ENCODE measurements at regions of chr16 and their contacts with region 1.

Region 1: GRCh38 chr16:11255737-11256660 is at the start of gene SOCS1:
- DNase-seq: peak; percentile 86 to 95
- ATAC-seq: peak; percentile 61 to 86 (median 72)
- H3K4me3 ChIP-seq: peak within 1 kb of the TSS; percentile 73
- H3K4me3 Mint-ChIP-seq: peak within 1 kb of the TSS; percentile 98
- H3K27ac ChIP-seq: peak within 1 kb of the TSS; percentile 87
- H3K27ac Mint-ChIP-seq: peak within 1 kb of the TSS; percentile 93 to 96
- H3K4me1 ChIP-seq: peaks cover 66% of the 10 kb centered on the region
- H3K4me1 Mint-ChIP-seq: peaks cover 39 to 54% of the 10 kb centered on the region in 2 donors
- H3K27me3 ChIP-seq: no peaks in the 10 kb centered on the region
- H3K27me3 Mint-ChIP-seq: no peaks in the 10 kb centered on the region
- CTCF ChIP-seq: peak; percentile 91
- total RNA-seq, gene SOCS1: 21.7 to 74.7 (median 27.2) TPM

Region 2: DNA sequence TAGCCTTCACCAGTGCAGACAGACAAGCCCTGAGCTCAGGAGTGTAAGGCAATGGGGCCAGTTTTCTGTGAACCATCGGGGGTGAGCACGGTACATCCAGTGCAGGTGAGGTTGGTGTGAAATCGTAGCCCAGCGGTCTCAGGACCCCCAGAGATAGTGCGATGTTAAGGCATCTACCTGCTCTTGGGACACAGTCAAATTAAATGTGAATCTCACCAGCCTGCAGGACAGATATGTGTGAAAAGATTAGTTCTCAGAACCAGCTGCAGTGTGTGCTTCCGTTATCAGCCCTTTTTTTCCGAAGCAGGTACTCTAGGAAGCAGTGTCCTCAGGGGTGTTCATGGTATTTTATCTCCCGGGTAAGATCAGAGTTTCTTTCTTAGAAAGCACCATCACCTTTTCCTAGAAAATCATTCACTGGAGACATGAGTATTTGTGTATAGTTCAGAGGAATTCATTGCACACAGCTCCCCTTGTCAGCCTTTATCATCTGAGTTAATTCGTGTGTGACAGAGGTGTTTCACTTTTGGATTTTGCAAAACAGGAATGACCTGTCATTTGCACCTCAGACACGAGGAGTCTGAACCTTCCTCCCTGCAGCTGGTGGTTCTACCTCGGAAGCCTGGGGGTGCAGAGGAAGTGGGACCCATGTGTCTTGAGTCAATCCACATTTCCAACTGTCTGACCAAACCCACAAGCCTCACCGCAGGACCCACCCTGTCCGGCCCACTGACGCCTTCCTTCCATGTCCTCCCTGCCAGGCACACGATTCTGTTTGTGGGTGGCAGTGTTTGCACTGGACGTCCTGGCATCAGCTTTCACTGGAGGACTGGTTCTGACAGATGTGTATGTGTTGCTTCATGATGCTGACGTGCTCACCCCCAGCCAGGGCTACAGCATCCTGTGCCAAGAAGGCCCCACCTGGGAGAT is 203.9 kb before region 1 on chr16:
- intact Hi-C with region 1: loop called (anchors 2 kb)
- DNase-seq: peak; percentile 26 to 43
- ATAC-seq: peak; percentile 79 to 80 (median 80)
- H3K4me3 ChIP-seq: no peak overlapping the region
- H3K4me3 Mint-ChIP-seq: peak overlapping the region; percentile 69
- H3K27ac ChIP-seq: peak overlapping the region; percentile 52
- H3K27ac Mint-ChIP-seq: peak overlapping the region; percentile 66 to 84
- H3K4me1 ChIP-seq: peaks cover 47% of the 10 kb centered on the region
- H3K4me1 Mint-ChIP-seq: peaks cover 49 to 52% of the 10 kb centered on the region in 2 donors
- H3K27me3 ChIP-seq: no peaks in the 10 kb centered on the region
- H3K27me3 Mint-ChIP-seq: no peaks in the 10 kb centered on the region
- CTCF ChIP-seq: no peak

Region 3: DNA sequence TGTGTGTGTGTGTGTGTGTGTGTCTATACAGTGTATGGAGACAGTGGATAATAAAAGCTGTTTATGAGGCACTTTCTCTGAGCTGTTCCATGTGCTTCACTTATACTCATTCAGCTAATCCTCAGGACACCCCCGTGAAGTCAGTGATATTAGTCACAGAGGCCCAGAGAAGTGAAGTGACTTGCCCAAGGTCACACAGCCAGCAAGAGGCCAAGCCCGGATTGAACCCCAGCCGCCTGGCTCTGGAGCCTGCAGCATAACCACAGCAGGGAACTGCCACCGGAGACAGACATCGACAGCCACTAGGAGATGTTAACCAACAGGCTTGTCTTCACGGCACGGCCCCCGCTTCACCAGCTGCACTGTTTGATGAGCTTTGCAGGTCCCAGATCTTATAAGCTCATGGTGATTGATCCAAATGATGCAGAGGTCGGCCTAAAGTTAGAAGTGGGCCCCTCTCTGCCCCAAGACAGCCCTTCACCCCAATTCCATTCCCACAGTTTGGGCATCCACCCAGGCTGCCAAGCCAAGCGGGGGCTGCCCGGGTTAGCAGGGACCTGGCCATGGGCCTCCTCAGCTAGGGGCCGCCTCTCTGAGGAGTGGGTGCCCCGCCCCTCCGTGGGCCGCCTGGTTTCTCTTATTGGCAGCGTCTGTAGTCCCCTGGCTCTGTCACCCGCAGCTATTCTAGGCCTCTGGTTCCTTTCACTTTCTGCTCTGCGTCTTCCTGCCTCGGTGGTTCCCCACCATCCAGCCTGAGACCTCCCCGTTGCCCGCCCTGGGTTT is 30.9 kb before region 1 on chr16:
- intact Hi-C with region 1: loop called (anchors 1 kb)
- DNase-seq: peak; percentile 73 to 91
- ATAC-seq: peak; percentile 83 to 92 (median 89)
- H3K4me3 ChIP-seq: peak overlapping the region; percentile 19
- H3K4me3 Mint-ChIP-seq: peak overlapping the region; percentile 83
- H3K27ac ChIP-seq: peak overlapping the region; percentile 87
- H3K27ac Mint-ChIP-seq: peak overlapping the region; percentile 91
- H3K4me1 ChIP-seq: peaks cover 34% of the 10 kb centered on the region
- H3K4me1 Mint-ChIP-seq: peaks cover 19 to 35% of the 10 kb centered on the region in 2 donors
- H3K27me3 ChIP-seq: no peaks in the 10 kb centered on the region
- H3K27me3 Mint-ChIP-seq: no peaks in the 10 kb centered on the region
- CTCF ChIP-seq: no peak

Region 4: DNA sequence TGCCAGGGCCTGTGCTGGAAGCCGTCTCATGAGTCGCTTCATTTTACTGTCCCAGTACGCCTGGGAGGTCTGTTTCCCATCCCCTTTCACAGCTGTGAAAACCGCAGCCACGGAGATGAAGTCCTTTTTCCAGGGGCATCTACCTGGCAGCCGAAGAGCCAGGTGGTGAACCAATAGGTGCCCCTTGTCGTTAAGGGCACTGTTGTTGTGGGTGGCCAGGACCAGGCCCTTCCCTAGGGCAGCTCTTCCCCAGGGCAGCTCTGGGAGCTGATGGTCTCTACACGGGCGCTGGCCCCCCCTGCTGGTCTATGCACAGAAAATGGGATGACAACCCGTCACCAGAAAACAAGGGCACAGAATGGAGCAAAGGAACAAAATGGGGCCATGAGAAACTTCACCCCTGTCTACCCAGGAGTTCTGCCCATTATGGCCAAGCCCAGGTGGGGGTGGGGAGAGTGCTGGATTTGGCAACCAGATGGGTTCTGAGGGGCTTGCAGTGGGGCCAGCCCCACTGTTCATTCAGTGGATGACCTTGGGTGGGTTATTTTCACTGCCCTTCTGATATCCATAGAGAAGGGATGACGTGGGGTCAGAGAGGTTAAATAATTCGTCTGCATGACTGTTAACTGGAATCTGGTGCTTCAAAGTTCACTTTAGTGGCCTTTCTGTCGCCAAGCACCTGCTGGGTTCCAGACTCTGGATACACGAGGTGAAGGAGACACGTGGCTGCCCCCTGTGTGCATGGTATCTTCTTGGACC is 100.8 kb after region 1 on chr16:
- intact Hi-C with region 1: loop called (anchors 2 kb)
- DNase-seq: peak; percentile 41 to 72
- ATAC-seq: no peak
- H3K4me3 ChIP-seq: no peak overlapping the region
- H3K4me3 Mint-ChIP-seq: no peak overlapping the region
- H3K27ac ChIP-seq: no peak overlapping the region
- H3K27ac Mint-ChIP-seq: no peak overlapping the region
- H3K4me1 ChIP-seq: peaks cover 40% of the 10 kb centered on the region
- H3K4me1 Mint-ChIP-seq: peaks cover 37 to 39% of the 10 kb centered on the region in 2 donors
- H3K27me3 ChIP-seq: peaks cover 60% of the 10 kb centered on the region
- H3K27me3 Mint-ChIP-seq: peaks cover 68 to 71% of the 10 kb centered on the region in 2 donors
- CTCF ChIP-seq: peak; percentile 45

Measured in natural killer cell (primary cell).